CD14-positive monocyte (primary cell): ENCODE measurements at regions of chr20 and their contacts with region 1.

Region 1: GRCh38 chr20:64062596-64063388 is at the start of gene TCEA2:
- DNase-seq: peak; percentile 87 to 90 (median 89)
- H3K4me3 ChIP-seq: peak within 1 kb of the TSS; percentile 65 to 82 (median 68)
- H3K4me3 Mint-ChIP-seq: peak within 1 kb of the TSS; percentile 82 to 87
- H3K27ac ChIP-seq: peak within 1 kb of the TSS in 1 of 2 donors; percentile 67
- H3K27ac Mint-ChIP-seq: peak within 1 kb of the TSS in 5 of 7 donors; percentile 18 to 81 (median 50)
- H3K4me1 ChIP-seq: peaks cover 32 to 53% of the 10 kb centered on the region in 2 donors
- H3K4me1 Mint-ChIP-seq: peaks cover 42% of the 10 kb centered on the region
- H3K27me3 ChIP-seq: no peaks in the 10 kb centered on the region
- H3K27me3 Mint-ChIP-seq: peaks cover 2 to 29% (median 20%) of the 10 kb centered on the region in 3 donors
- CTCF ChIP-seq: no peak
- polyA plus RNA-seq, gene TCEA2: 15.7 to 24.3 (median 16.0) TPM

Region 2: DNA sequence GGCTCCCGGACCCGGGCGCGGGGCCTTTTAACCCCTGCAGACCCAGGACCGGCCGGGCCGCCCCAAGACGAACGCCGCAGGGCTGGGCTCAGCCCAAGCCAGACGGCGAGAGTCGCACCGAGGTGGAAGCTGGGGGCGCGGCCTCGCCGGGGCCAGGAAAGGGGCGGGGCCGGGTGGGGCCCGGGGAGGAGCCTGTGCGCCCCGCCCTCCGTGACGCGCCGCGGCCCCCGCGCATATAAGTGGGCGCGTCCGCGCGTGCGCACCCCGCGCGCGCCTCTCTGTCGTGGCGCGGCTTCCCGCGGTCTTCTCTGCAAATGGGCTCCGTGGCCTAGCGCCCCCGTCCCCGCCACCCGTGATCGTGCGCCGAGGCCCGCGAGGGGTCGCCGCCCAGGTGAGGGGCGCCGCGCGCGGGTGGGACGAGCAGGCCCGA is 542.3 kb before region 1 on chr20 and contains the start of gene PPDPF:
- intact Hi-C with region 1: loop called in 1 of 2 experiments (anchors 10 kb)
- DNase-seq: peak; percentile 73 to 83 (median 75)
- H3K4me3 ChIP-seq: peak within 1 kb of the TSS; percentile 50 to 83 (median 68)
- H3K4me3 Mint-ChIP-seq: peak within 1 kb of the TSS; percentile 78 to 83
- H3K27ac ChIP-seq: peak within 1 kb of the TSS in 1 of 2 donors; percentile 53
- H3K27ac Mint-ChIP-seq: peak within 1 kb of the TSS; percentile 19 to 85 (median 63)
- H3K4me1 ChIP-seq: peaks cover 16 to 26% of the 10 kb centered on the region in 2 donors
- H3K4me1 Mint-ChIP-seq: peaks cover 12% of the 10 kb centered on the region
- H3K27me3 ChIP-seq: peaks cover 0 to 23% of the 10 kb centered on the region in 2 donors
- H3K27me3 Mint-ChIP-seq: peaks cover 24 to 41% (median 26%) of the 10 kb centered on the region in 3 donors
- CTCF ChIP-seq: no peak
- polyA plus RNA-seq, gene PPDPF: 13.4 to 39.9 (median 26.1) TPM

Region 3: GRCh38 chr20:63980806-63981728 is 81.7 kb before region 1 on chr20 and contains the start of gene PRPF6:
- intact Hi-C with region 1: loop called (anchors 2 to 5 kb)
- DNase-seq: peak; percentile 96
- H3K4me3 ChIP-seq: peak within 1 kb of the TSS; percentile 65 to 83 (median 76)
- H3K4me3 Mint-ChIP-seq: peak within 1 kb of the TSS; percentile 83 to 92
- H3K27ac ChIP-seq: peak within 1 kb of the TSS; percentile 50 to 89
- H3K27ac Mint-ChIP-seq: peak within 1 kb of the TSS; percentile 82 to 95 (median 91)
- H3K4me1 ChIP-seq: peaks cover 32 to 48% of the 10 kb centered on the region in 2 donors
- H3K4me1 Mint-ChIP-seq: peaks cover 40% of the 10 kb centered on the region
- H3K27me3 ChIP-seq: peaks cover 0 to 5% of the 10 kb centered on the region in 2 donors
- H3K27me3 Mint-ChIP-seq: peaks cover 3 to 11% (median 10%) of the 10 kb centered on the region in 3 donors
- CTCF ChIP-seq: peak; percentile 86
- polyA plus RNA-seq, gene PRPF6: 29.1 to 47.7 (median 34.5) TPM

Region 4: DNA sequence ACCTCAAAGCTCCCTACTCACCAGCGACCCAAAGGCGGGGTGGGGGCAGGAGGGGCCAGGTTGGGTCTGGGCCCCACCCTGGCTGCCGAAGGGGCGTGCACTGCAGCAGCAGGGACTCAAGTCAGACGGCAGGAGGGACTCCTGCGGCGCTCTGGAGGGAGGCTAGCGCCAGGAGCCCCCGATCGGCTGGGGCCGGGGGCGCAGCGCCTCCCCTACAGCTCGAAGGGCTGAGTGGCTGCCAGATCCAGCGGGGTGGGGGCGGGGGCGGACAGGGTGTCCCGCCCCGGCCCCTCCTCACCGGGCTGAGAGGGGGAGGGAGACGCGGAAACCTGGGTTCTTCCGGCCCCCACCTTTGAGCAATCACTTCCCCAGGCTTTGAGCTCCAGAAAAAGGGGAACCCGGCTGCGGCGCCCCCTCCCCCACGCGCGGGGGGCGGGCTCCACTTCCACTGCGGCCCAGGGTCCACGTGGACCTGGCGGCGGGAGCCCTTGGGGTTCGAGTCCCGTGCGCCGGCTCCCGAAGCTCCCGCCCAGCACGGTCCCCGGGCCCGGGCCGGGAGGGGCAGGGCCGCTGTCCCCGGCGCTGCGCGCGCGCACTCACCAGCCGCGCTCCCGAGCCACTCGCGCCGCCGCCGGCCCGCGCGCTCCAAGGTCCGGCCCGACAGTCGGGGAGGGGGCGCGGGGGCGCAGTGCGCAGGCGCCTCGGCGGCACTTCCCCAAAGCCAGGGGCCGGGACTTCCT is 16.7 kb after region 1 on chr20 and contains the start of gene RGS19:
- intact Hi-C with region 1: loop called (anchors 1 to 2 kb)
- DNase-seq: peak; percentile 89 to 94 (median 91)
- H3K4me3 ChIP-seq: peak within 1 kb of the TSS; percentile 84 to 100 (median 88)
- H3K4me3 Mint-ChIP-seq: peak within 1 kb of the TSS; percentile 95 to 97
- H3K27ac ChIP-seq: peak within 1 kb of the TSS; percentile 81 to 87
- H3K27ac Mint-ChIP-seq: peak within 1 kb of the TSS; percentile 89 to 95 (median 93)
- H3K4me1 ChIP-seq: peaks cover 54 to 77% of the 10 kb centered on the region in 2 donors
- H3K4me1 Mint-ChIP-seq: peaks cover 54% of the 10 kb centered on the region
- H3K27me3 ChIP-seq: peaks cover under 1 to 4% of the 10 kb centered on the region in 2 donors
- H3K27me3 Mint-ChIP-seq: peaks cover 7 to 10% (median 8%) of the 10 kb centered on the region in 3 donors
- CTCF ChIP-seq: no peak
- polyA plus RNA-seq, gene RGS19: 235 to 280 (median 244) TPM